Activated CD4-positive, alpha-beta T cell treated with anti-CD3 and anti-CD28 coated beads for 36 hours (primary cell): ENCODE measurements at regions of chr10 and their contacts with region 1.

Region 1: DNA sequence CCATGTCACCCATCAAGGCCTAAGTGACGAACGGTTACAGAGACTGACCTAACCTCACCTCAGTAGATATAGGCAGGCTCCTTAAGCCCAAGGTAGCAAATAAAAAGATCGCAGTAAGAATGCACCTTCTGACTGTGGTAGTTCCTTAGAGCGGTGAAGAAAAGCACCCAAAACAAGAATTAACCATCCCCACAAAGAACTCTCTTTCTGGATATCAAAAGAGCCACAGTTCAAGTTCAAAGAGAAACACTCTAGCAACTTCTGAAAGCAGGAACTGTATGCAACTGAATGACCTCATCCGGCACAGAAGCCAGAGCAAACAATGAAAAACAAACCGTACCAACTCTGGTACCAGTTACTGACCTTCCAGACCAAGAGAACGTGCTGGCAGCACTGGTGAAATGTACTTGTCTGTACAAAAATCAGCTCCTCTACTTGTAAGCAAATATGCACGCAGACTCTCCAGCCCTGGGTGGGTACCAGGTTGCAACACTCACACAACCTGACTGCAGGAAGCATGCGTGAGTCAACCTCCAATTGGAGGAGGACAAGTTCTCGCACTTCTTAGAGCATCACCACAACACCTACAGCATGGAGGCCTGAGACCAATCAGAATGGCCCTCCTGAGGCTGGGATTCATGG is 202.7 kb downstream of the FAM107B start:
- DNase-seq: peak; percentile 78
- ATAC-seq: peak; percentile 88
- H3K4me3 Mint-ChIP-seq: peak overlapping the region; percentile 66
- H3K27ac Mint-ChIP-seq: peak overlapping the region; percentile 93
- H3K4me1 Mint-ChIP-seq: peaks cover 93% of the 10 kb centered on the region
- H3K27me3 Mint-ChIP-seq: no peaks in the 10 kb centered on the region

Region 2: GRCh38 chr10:14519785-14520184 is 52.2 kb before region 1 on chr10:
- CTCF ChIA-PET with region 1: no interaction called
- POLR2A ChIA-PET with region 1: no interaction called
- intact Hi-C with region 1: no loop called
- DNase-seq: no peak
- ATAC-seq: no peak
- H3K4me3 Mint-ChIP-seq: no peak overlapping the region
- H3K27ac Mint-ChIP-seq: no peak overlapping the region
- H3K4me1 Mint-ChIP-seq: peaks cover 26% of the 10 kb centered on the region
- H3K27me3 Mint-ChIP-seq: no peaks in the 10 kb centered on the region

Region 3: GRCh38 chr10:14583252-14583651 is 11.3 kb after region 1 on chr10:
- CTCF ChIA-PET with region 1: interaction called, 7 read pairs
- POLR2A ChIA-PET with region 1: interaction called, 8 read pairs
- intact Hi-C with region 1: loop called (anchors 1 kb)
- DNase-seq: peak; percentile 92
- ATAC-seq: peak; percentile 71
- H3K4me3 Mint-ChIP-seq: peak overlapping the region; percentile 63
- H3K27ac Mint-ChIP-seq: peak overlapping the region; percentile 93
- H3K4me1 Mint-ChIP-seq: peaks cover 88% of the 10 kb centered on the region
- H3K27me3 Mint-ChIP-seq: no peaks in the 10 kb centered on the region